ENCODE measurements at regions of chr11 and their contacts with region 1.

Region 1: DNA sequence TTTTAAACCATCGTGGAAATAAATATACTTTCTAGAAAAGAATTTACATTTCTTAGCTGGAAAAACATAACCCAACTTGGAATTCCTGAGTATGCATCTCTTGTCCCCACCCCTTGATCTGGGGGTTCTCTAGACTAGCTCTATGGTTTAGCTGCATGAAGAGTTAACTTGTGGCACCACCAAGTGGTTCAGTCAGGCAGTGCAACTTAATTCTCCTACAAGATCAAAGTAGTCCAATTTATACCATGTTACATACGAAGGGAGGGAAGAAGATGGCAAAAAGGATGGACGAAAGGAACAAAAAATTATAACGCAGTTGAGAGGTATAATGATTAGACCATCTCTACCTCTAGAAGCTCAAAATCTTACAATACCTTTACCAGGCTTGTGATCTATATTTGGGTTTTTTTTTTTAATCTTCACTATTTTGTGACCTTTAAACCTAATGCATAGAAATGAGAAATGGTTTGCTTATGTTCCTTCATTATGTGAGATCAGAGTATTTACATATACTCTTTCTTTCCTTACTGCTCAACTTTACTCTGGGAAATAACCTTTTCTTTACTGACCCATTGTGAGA is 28.5 kb upstream of the ALKBH3 start:
- DNase-seq: peak; percentile 56 to 67
- H3K4me3 ChIP-seq: no peak overlapping the region
- H3K27ac ChIP-seq: no peak overlapping the region
- H3K4me1 ChIP-seq: no peaks in the 10 kb centered on the region
- H3K27me3 ChIP-seq: no peaks in the 10 kb centered on the region
- CTCF ChIP-seq: peak; percentile 96

Region 2: GRCh38 chr11:43419460-43419859 is 432.7 kb before region 1 on chr11:
- CTCF ChIA-PET with region 1: no interaction called
- POLR2A ChIA-PET with region 1: no interaction called
- intact Hi-C with region 1: loop called (anchors 10 kb)
- DNase-seq: no peak
- H3K4me3 ChIP-seq: no peak overlapping the region
- H3K27ac ChIP-seq: no peak overlapping the region
- H3K4me1 ChIP-seq: no peaks in the 10 kb centered on the region
- H3K27me3 ChIP-seq: no peaks in the 10 kb centered on the region
- CTCF ChIP-seq: peak; percentile 83

Region 3: GRCh38 chr11:43504316-43504950 is 347.7 kb before region 1 on chr11:
- CTCF ChIA-PET with region 1: interaction called, 3 read pairs
- POLR2A ChIA-PET with region 1: no interaction called
- intact Hi-C with region 1: loop called (anchors 5 kb)
- DNase-seq: peak in 1 of 2 experiments; percentile 11
- H3K4me3 ChIP-seq: no peak overlapping the region
- H3K27ac ChIP-seq: no peak overlapping the region
- H3K4me1 ChIP-seq: peaks cover 9% of the 10 kb centered on the region
- H3K27me3 ChIP-seq: peaks cover 19% of the 10 kb centered on the region; the same call in 1 of the 2 replicates
- CTCF ChIP-seq: peak; percentile 58

Region 4: GRCh38 chr11:43573233-43573632 is 278.9 kb before region 1 on chr11:
- CTCF ChIA-PET with region 1: no interaction called
- POLR2A ChIA-PET with region 1: no interaction called
- intact Hi-C with region 1: loop called (anchors 5 kb)
- DNase-seq: no peak
- H3K4me3 ChIP-seq: no peak overlapping the region
- H3K27ac ChIP-seq: no peak overlapping the region
- H3K4me1 ChIP-seq: no peaks in the 10 kb centered on the region
- H3K27me3 ChIP-seq: peaks cover 77% of the 10 kb centered on the region
- CTCF ChIP-seq: peak; percentile 72

Region 5: DNA sequence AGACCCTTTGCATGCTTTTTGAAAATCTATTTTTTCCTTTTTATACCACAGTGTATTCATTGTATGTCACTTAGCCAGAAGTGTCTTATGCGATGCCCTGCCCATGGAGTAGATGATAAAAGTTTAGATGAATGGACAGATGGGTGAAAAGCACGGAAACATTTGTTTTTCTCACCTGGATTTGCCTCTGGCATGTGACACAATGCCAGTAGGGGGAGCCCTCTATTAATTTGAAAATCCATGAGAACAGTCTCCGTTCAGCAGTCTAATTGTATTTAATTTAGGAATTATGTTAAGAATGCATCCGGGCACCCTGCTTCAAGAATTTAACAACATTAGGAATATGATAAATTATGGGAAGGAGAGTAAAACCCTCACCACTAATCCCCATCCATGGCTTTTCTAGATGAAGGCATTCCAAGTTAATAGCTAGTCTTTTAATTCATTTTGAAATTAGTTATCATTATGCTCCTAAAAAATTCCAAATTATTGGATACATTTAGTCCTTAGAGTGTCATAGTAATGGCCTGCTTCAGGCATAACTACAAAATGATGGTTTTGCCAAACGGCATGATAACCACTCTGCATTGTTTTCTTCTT is 26.8 kb before region 1 on chr11:
- CTCF ChIA-PET with region 1: interaction called, 15 read pairs
- POLR2A ChIA-PET with region 1: interaction called, 5 read pairs
- intact Hi-C with region 1: no loop called
- DNase-seq: peak in 1 of 2 experiments; percentile 30
- H3K4me3 ChIP-seq: no peak overlapping the region
- H3K27ac ChIP-seq: no peak overlapping the region
- H3K4me1 ChIP-seq: peaks cover 7% of the 10 kb centered on the region
- H3K27me3 ChIP-seq: no peaks in the 10 kb centered on the region
- CTCF ChIP-seq: peak; percentile 82